BJ (cell line): ENCODE measurements at regions of chr11 and their contacts with region 1.

Region 1: DNA sequence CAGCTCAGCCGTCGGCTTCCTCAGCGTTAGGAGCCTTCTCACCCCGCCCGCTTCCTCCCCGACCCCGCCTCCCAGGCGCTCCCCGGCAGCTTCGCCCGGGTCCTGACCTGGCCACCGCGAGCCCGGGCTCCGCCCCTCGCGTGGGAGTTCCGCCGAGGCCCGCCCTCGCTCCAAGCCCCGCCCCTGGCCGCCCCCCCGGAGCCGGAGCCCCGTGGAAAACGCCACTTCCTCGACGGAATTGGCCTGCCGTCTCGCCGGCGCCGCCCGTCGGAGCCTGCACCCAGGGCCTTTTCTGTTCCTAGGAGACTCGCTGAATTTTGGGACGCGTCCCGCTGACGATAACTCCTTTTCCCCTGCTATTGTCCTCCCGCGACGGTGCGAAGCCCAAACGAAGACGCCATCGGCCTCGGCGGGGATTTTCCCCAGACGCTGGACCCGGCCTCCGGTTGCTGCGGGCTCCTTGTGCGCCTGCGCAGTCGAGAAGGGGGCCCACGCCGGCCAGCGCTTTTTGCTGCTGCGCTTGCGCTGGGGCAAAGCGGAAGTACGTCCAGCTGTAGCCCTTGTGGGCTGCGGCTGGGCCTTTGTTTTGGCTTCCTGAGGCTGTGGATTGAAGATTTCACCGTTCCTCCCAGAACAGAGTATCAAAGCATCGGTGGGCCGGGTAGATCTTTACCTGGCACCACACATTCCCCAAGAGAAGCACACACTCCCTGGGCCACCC is 10.0 kb downstream of the RELA start:
- DNase-seq: peak; percentile 66
- H3K4me3 ChIP-seq: peak overlapping the region; percentile 47
- H3K27me3 ChIP-seq: no peaks in the 10 kb centered on the region
- CTCF ChIP-seq: no peak

Region 2: DNA sequence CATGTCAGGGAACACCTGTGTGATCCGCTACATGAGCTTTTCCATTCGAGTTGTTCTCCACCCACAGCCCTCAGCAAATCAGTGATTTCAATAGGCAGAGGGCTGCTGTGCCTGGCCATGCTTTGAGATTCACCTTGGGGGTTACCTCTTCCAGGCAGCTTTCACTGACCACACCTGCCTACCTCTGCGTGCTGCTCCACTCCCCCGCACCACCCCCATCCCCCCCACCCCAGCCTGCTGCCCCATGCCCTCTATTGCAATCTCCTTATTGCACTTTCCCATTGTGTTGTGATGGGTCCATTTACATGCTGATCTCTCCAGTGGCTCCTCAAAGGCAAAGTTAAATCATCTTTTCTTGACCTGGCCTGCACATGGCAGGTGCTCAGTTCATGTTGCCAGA is 408.9 kb before region 1 on chr11:
- CTCF ChIA-PET with region 1: no interaction called
- POLR2A ChIA-PET with region 1: no interaction called
- DNase-seq: no peak
- H3K4me3 ChIP-seq: no peak overlapping the region
- H3K27me3 ChIP-seq: peaks cover 1% of the 10 kb centered on the region; the same call in 1 of the 2 replicates
- CTCF ChIP-seq: no peak

Region 3: GRCh38 chr11:65479184-65480145 is 173.2 kb before region 1 on chr11:
- CTCF ChIA-PET with region 1: no interaction called
- POLR2A ChIA-PET with region 1: no interaction called
- DNase-seq: peak; percentile 94
- H3K4me3 ChIP-seq: peak overlapping the region; percentile 16
- H3K27me3 ChIP-seq: no peaks in the 10 kb centered on the region
- CTCF ChIP-seq: peak; percentile 55

Region 4: GRCh38 chr11:66119348-66120133 is 466.9 kb after region 1 on chr11:
- CTCF ChIA-PET with region 1: no interaction called
- POLR2A ChIA-PET with region 1: interaction called, 10 read pairs
- DNase-seq: peak; percentile 48
- H3K4me3 ChIP-seq: no peak overlapping the region
- H3K27me3 ChIP-seq: no peaks in the 10 kb centered on the region
- CTCF ChIP-seq: no peak